Body of pancreas (tissue), 4 donors: ENCODE measurements at regions of chr4 and their contacts with region 1.

Region 1: DNA sequence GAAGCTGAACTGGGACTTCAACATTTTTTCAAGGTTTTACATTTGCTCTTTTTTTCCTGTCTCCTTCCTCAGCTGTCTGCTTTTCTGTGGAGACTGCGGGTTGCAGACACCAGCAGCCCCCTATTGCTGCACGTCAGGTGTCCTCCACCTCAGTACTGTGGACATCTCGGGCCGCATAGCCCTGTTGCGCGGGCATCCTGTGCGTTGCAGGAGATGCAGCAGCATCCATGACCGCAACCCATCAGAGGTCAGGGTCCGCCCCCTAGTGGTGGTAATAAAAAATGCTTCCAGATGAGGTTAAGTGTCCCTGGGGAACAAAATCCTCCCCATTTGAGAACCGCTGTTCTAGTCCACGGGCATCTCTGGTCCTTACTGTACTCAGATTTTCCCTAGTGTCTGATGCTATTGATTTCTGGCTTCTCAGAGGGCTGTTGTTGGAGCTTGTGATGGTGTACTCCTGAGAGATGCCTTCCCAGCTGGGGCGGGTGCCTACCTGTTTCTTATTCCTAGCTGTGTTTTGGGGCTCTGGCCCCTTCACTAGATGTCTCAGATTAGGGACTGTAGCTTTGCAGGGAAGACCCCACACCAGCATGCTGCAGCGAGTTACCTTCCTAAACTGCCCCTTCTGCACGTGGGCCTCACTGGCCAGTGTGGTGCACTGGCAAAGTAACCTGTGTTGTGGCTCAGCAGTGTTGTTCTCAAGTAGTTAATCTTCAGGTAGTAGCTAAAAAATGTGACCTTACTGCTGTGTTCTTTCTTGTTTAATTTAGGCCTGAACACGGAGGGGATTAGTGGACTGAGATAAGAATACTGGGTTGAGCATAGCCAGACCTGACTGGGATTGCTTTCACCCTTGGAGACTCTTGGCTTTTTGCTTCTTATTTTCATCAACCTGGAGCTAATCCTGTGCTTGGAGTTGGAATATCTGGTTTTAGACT is 28.2 kb downstream of the NSD2 start:
- DNase-seq: peak; percentile 71 to 81 (median 75)
- ATAC-seq: peak; percentile 87
- H3K4me3 ChIP-seq: no peak overlapping the region
- H3K27ac ChIP-seq: no peak overlapping the region
- H3K4me1 ChIP-seq: no peaks in the 10 kb centered on the region
- H3K27me3 ChIP-seq: no peaks in the 10 kb centered on the region
- CTCF ChIP-seq: peak; percentile 79 to 89 (median 86)
- POLR2A ChIP-seq: no peak

Region 2: GRCh38 chr4:1547856-1548826 is 351.3 kb before region 1 on chr4:
- intact Hi-C with region 1: no loop called
- DNase-seq: peak in 1 of 4 donors; percentile 15
- ATAC-seq: peak; percentile 34
- H3K4me3 ChIP-seq: no peak overlapping the region
- H3K27ac ChIP-seq: peak overlapping the region in 2 of 4 donors; percentile 29 to 30
- H3K4me1 ChIP-seq: peaks cover 8% of the 10 kb centered on the region
- H3K27me3 ChIP-seq: peaks cover 0 to 7% of the 10 kb centered on the region in 2 donors
- CTCF ChIP-seq: no peak
- POLR2A ChIP-seq: no peak

Region 3: DNA sequence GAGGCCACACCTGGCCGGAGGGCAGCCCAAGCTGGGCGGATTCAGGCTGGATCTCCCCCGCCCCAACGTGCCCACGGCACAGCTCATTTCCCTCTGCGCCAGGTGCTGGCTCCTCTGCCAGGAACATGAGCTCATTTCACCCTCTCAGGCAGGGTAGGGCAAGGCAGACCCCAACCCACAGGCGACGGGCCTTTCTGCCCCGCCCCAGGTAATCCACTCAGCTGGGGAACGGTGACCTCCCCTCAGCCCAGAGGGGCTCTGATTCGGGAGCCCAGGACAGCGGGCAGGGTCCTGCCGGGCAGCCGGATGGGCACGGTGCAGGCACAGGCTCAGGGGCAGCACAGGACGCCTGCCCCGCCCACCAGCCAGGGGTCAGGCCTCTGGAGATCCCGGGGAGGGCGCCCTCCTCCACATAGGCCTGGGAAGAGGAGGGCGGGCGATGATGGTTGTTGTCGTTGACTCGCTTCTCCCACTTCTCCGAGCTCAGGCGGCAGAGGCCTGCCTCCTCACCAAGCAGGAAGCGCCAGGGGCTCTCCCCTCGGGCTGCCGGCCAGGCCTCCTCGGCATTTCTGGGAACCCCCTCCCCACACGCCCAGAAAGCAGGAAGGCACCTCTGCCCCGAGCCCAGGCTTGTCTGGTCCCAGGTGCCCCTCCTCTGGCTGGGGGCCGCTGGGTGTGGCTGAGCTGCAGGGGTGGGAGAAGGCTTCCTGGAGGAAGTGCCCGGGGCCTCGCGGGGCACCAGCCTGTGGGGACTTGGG is 147.0 kb before region 1 on chr4:
- intact Hi-C with region 1: loop called (anchors 5 kb)
- DNase-seq: peak in 1 of 4 donors; percentile 36
- ATAC-seq: no peak
- H3K4me3 ChIP-seq: no peak overlapping the region
- H3K27ac ChIP-seq: peak overlapping the region in 2 of 4 donors; percentile 62 to 70
- H3K4me1 ChIP-seq: peaks cover 31% of the 10 kb centered on the region
- H3K27me3 ChIP-seq: no peaks in the 10 kb centered on the region
- CTCF ChIP-seq: no peak
- POLR2A ChIP-seq: no peak

Region 4: GRCh38 chr4:1856042-1856788 is 43.2 kb before region 1 on chr4 and contains the start of gene LETM1:
- intact Hi-C with region 1: loop called (anchors 10 kb)
- DNase-seq: peak; percentile 96 to 97 (median 97)
- ATAC-seq: peak; percentile 97
- H3K4me3 ChIP-seq: peak within 1 kb of the TSS; percentile 33 to 83
- H3K27ac ChIP-seq: peak within 1 kb of the TSS; percentile 66 to 85 (median 83)
- H3K4me1 ChIP-seq: peaks cover 53% of the 10 kb centered on the region
- H3K27me3 ChIP-seq: no peaks in the 10 kb centered on the region
- CTCF ChIP-seq: peak in 4 of 7 experiments; percentile 6 to 25 (median 18)
- POLR2A ChIP-seq: peak; percentile 73 to 79 (median 79)
- total RNA-seq, gene LETM1: 23.3 to 52.4 TPM